Ovary (tissue), 10 donors: ENCODE measurements at regions of chr1 and their contacts with region 1.

Region 1: GRCh38 chr1:9196129-9197040 is 38.2 kb upstream of the H6PD start:
- DNase-seq: peak; percentile 69 to 81 (median 77)
- H3K4me3 ChIP-seq: no peak overlapping the region
- H3K27ac ChIP-seq: no peak overlapping the region
- H3K4me1 ChIP-seq: peaks cover 2% of the 10 kb centered on the region
- H3K27me3 ChIP-seq: no peaks in the 10 kb centered on the region
- CTCF ChIP-seq: peak; percentile 68 to 78 (median 74)
- EP300 ChIP-seq: no peak
- POLR2A ChIP-seq: no peak

Region 2: GRCh38 chr1:9100471-9101043 is 95.8 kb before region 1 on chr1:
- intact Hi-C with region 1: no loop called
- DNase-seq: no peak
- H3K4me3 ChIP-seq: no peak overlapping the region
- H3K27ac ChIP-seq: no peak overlapping the region
- H3K4me1 ChIP-seq: no peaks in the 10 kb centered on the region
- H3K27me3 ChIP-seq: no peaks in the 10 kb centered on the region
- CTCF ChIP-seq: no peak
- EP300 ChIP-seq: no peak
- POLR2A ChIP-seq: no peak

Region 3: DNA sequence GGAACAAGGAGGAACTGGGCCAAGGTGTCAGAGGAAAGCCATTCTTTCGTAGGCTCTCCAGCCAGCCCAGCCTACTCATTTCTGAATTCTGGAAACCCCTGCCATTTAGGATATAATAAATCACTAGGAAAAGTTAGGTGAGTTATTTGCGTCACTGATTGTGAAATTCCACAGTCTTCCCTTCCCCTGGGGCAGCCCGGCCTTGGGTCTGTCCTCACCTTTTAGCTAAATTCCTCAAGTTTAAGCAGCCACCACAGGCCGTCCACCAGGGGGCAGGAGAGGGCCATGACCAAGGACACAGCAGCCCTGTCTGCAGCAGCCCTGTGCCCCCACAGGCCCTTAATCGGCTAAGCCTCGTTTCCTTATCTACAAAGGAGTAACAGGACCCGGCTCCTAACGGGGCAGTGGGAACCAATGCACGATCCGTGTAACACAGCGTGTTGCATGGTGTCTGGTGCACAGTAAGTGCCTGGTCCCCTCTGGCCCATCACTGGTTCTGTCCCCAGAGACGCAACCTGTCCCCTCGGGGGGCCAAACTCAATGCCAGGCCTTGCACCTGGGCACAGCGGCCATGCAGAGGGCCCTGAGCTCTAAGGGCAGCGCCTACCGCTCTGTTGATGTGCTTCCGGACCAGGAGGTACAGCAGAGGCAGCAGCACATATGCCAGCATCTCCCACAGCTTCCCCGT is 85.6 kb before region 1 on chr1:
- intact Hi-C with region 1: loop called in 2 of 4 experiments (anchors 5 kb)
- DNase-seq: peak; percentile 92 to 97 (median 95)
- H3K4me3 ChIP-seq: no peak overlapping the region
- H3K27ac ChIP-seq: no peak overlapping the region
- H3K4me1 ChIP-seq: peaks cover 2% of the 10 kb centered on the region
- H3K27me3 ChIP-seq: no peaks in the 10 kb centered on the region
- CTCF ChIP-seq: peak; percentile 84 to 97 (median 92)
- EP300 ChIP-seq: no peak
- POLR2A ChIP-seq: peak; percentile 12

Region 4: GRCh38 chr1:9129266-9130041 is 66.9 kb before region 1 on chr1:
- intact Hi-C with region 1: loop called in 1 of 4 experiments (anchors 10 kb)
- DNase-seq: peak; percentile 87 to 94 (median 91)
- H3K4me3 ChIP-seq: peak overlapping the region; percentile 81
- H3K27ac ChIP-seq: peak overlapping the region; percentile 82 to 90
- H3K4me1 ChIP-seq: peaks cover 2% of the 10 kb centered on the region
- H3K27me3 ChIP-seq: no peaks in the 10 kb centered on the region
- CTCF ChIP-seq: no peak
- EP300 ChIP-seq: no peak
- POLR2A ChIP-seq: no peak

Region 5: GRCh38 chr1:9145021-9145668 is 51.2 kb before region 1 on chr1:
- intact Hi-C with region 1: loop called in 3 of 4 experiments (anchors 5 kb)
- DNase-seq: peak; percentile 48 to 70 (median 63)
- H3K4me3 ChIP-seq: no peak overlapping the region
- H3K27ac ChIP-seq: no peak overlapping the region
- H3K4me1 ChIP-seq: peaks cover 4% of the 10 kb centered on the region
- H3K27me3 ChIP-seq: no peaks in the 10 kb centered on the region
- CTCF ChIP-seq: no peak
- EP300 ChIP-seq: no peak
- POLR2A ChIP-seq: no peak

Region 6: DNA sequence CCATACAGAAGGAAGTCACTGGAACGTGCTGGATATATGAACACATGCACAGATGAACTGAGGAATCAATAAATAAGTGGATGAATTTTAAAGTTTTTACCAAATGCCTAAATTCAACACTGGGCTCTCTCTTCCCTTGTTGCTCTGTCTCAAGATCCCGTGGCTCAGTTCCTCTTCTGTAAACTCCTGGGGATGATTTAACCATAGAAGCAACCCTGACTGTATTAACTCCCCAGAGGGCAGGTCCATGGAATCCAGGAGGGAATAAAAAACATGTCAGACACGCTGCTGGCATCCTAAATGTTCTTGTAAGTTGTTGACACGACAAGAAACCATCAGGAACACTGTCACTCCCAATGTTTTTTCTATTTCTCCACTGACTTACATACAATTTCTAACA is 22.1 kb before region 1 on chr1:
- intact Hi-C with region 1: no loop called
- DNase-seq: no peak
- H3K4me3 ChIP-seq: no peak overlapping the region
- H3K27ac ChIP-seq: no peak overlapping the region
- H3K4me1 ChIP-seq: no peaks in the 10 kb centered on the region
- H3K27me3 ChIP-seq: no peaks in the 10 kb centered on the region
- CTCF ChIP-seq: no peak
- EP300 ChIP-seq: no peak
- POLR2A ChIP-seq: no peak